HepG2 (cell line): ENCODE measurements at regions of chr3 and their contacts with region 1.

Region 1: GRCh38 chr3:34568766-34569165 is 770.3 kb downstream of the PDCD6IP start:
- DNase-seq: no peak
- ATAC-seq: no peak
- H3K4me3 ChIP-seq: no peak overlapping the region
- H3K27ac ChIP-seq: no peak overlapping the region
- H3K4me1 ChIP-seq: no peaks in the 10 kb centered on the region
- H3K27me3 ChIP-seq: no peaks in the 10 kb centered on the region
- CTCF ChIP-seq: no peak
- EP300 ChIP-seq: no peak
- POLR2A ChIP-seq: no peak
- RAD21 ChIP-seq: no peak

Region 2: DNA sequence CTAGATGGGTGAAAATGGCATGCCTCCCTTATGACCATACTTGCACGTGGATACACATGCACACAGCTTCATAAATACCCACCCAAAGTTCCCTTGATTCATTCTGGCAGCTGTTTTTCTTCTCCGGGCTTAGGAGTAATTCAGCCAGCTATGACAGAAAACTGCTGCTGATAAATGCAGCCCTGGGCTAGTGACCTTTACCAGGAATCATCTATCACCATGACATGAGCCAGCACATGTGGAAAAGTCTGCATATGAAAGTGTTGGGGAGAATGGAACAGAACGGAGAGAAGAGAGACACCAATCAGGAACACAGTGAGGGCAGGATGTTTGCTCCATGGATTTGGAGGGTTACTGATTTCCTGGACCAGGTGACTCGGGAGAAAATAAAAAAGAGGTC is 64.0 kb before region 1 on chr3:
- CTCF ChIA-PET with region 1: no interaction called
- POLR2A ChIA-PET with region 1: no interaction called
- in situ Hi-C with region 1: no loop called
- intact Hi-C with region 1: loop called (anchors 2 kb)
- DNase-seq: no peak
- ATAC-seq: no peak
- H3K4me3 ChIP-seq: no peak overlapping the region
- H3K27ac ChIP-seq: no peak overlapping the region
- H3K4me1 ChIP-seq: no peaks in the 10 kb centered on the region
- H3K27me3 ChIP-seq: no peaks in the 10 kb centered on the region
- CTCF ChIP-seq: no peak
- EP300 ChIP-seq: no peak
- POLR2A ChIP-seq: no peak
- RAD21 ChIP-seq: no peak